ENCODE measurements at regions of chr12 and their contacts with region 1.

Region 1: GRCh38 chr12:110224379-110225304 is 56.4 kb upstream of the ATP2A2 start:
- DNase-seq: no peak
- ATAC-seq: peak; percentile 27 to 76 (median 66)
- H3K4me3 ChIP-seq: peak overlapping the region in 8 of 10 donors; percentile 2 to 44 (median 28)
- H3K27ac ChIP-seq: peak overlapping the region; percentile 20 to 82 (median 66)
- H3K4me1 ChIP-seq: peaks cover 2 to 51% (median 34%) of the 10 kb centered on the region in 9 donors
- H3K27me3 ChIP-seq: no peaks in the 10 kb centered on the region
- CTCF ChIP-seq: peak; percentile 27 to 73 (median 54)

Region 2: GRCh38 chr12:110109037-110109836 is 115.4 kb before region 1 on chr12:
- intact Hi-C with region 1: loop called in 5 of 10 experiments (anchors 5 to 10 kb)
- DNase-seq: peak; percentile 60 to 69
- ATAC-seq: peak; percentile 70 to 91 (median 82)
- H3K4me3 ChIP-seq: no peak overlapping the region
- H3K27ac ChIP-seq: peak overlapping the region; percentile 64 to 88 (median 80)
- H3K4me1 ChIP-seq: peaks cover 8 to 45% (median 32%) of the 10 kb centered on the region in 9 donors
- H3K27me3 ChIP-seq: no peaks in the 10 kb centered on the region
- CTCF ChIP-seq: no peak

Region 3: DNA sequence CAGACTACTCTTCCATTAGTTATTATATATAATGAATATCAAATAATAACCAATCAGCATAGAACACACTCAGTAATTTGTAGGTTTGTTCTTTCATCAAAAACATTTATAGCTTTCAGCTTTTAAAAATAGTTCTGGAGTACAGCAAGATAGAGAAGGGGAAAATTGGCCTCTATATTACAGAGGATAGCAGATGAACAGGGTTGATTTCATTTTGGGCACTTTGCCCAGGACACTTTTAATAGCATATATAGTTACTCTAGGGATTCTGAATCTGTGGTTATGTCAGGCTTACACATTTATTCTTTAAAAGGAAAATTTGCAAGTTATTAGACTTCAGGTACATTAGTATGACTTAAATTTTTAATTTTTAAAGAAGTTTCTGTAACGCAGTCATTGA is 47.9 kb before region 1 on chr12:
- intact Hi-C with region 1: loop called in 1 of 10 experiments (anchors 5 kb)
- DNase-seq: peak in 1 of 2 donors; percentile 21
- ATAC-seq: peak in 6 of 8 donors; percentile 47 to 88 (median 72)
- H3K4me3 ChIP-seq: no peak overlapping the region
- H3K27ac ChIP-seq: peak overlapping the region in 6 of 10 donors; percentile 2 to 65 (median 32)
- H3K4me1 ChIP-seq: peaks cover 0 to 29% (median 20%) of the 10 kb centered on the region in 9 donors
- H3K27me3 ChIP-seq: no peaks in the 10 kb centered on the region
- CTCF ChIP-seq: no peak

Region 4: DNA sequence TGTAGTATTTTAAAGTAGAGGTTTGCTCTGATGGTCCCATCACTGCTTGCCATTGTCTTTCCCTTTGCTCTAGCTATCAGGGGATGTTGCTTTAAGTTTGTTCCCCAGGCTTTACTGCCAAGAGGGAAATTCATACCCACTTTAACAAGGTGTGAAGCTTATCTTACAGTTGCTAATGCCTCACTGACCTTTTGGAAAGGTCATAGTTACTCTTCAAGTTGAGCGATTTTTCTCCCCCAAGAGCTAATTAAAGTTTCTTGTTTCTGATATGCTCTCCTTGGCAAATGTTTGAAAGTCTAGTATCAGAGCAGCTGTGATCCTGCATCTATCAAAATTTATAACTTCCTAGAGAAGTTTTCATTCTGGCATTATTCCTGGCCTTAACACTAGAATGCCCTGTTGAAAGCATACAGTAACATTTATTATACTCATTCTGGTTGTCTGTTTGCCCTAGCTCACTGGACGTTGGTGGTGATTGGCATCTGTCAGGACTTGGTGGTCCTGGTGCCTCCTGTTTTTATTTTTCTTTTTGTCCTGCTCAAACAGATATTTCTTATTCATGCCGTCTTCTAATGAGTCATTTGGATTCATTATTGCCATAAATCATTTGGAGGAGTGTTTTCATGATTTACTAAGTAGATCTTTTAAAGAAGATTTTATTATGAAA is 64.5 kb after region 1 on chr12:
- intact Hi-C with region 1: loop called in 5 of 10 experiments (anchors 5 to 10 kb)
- DNase-seq: no peak
- ATAC-seq: peak in 6 of 8 donors; percentile 9 to 54 (median 38)
- H3K4me3 ChIP-seq: peak overlapping the region in 5 of 10 donors; percentile 3 to 17 (median 7)
- H3K27ac ChIP-seq: peak overlapping the region in 9 of 10 donors; percentile 28 to 99 (median 56)
- H3K4me1 ChIP-seq: peaks cover 0 to 92% (median 65%) of the 10 kb centered on the region in 9 donors
- H3K27me3 ChIP-seq: no peaks in the 10 kb centered on the region
- CTCF ChIP-seq: no peak

Measured in heart right ventricle (tissue), 16 donors.